HEK293 (cell line): ENCODE measurements at regions of chr12 and their contacts with region 1.

Region 1: GRCh38 chr12:95473884-95474659 is at the start of gene METAP2:
- H3K4me3 ChIP-seq: peak within 1 kb of the TSS; percentile 85
- H3K27ac ChIP-seq: peak within 1 kb of the TSS; percentile 81
- H3K4me1 ChIP-seq: peaks cover 4% of the 10 kb centered on the region; the same call in 1 of the 2 replicates
- CTCF ChIP-seq: no peak

Region 2: GRCh38 chr12:95217377-95218149 is 256.5 kb before region 1 on chr12 and contains the starts of genes FGD6 and VEZT:
- CTCF ChIA-PET with region 1: interaction called, 4 read pairs
- POLR2A ChIA-PET with region 1: interaction called, 26 read pairs
- H3K4me3 ChIP-seq: peak within 1 kb of the TSS; percentile 81
- H3K27ac ChIP-seq: peak within 1 kb of the TSS; percentile 96
- H3K4me1 ChIP-seq: peaks cover 4% of the 10 kb centered on the region
- CTCF ChIP-seq: peak; percentile 80; the same call in 1 of the 2 replicates

Region 3: GRCh38 chr12:95623585-95624042 is 149.5 kb after region 1 on chr12:
- CTCF ChIA-PET with region 1: no interaction called
- POLR2A ChIA-PET with region 1: no interaction called
- H3K4me3 ChIP-seq: no peak overlapping the region
- H3K27ac ChIP-seq: no peak overlapping the region
- H3K4me1 ChIP-seq: no peaks in the 10 kb centered on the region; the same call in 1 of the 2 replicates
- CTCF ChIP-seq: no peak